ENCODE measurements at regions of chr11 and their contacts with region 1.

Region 1: DNA sequence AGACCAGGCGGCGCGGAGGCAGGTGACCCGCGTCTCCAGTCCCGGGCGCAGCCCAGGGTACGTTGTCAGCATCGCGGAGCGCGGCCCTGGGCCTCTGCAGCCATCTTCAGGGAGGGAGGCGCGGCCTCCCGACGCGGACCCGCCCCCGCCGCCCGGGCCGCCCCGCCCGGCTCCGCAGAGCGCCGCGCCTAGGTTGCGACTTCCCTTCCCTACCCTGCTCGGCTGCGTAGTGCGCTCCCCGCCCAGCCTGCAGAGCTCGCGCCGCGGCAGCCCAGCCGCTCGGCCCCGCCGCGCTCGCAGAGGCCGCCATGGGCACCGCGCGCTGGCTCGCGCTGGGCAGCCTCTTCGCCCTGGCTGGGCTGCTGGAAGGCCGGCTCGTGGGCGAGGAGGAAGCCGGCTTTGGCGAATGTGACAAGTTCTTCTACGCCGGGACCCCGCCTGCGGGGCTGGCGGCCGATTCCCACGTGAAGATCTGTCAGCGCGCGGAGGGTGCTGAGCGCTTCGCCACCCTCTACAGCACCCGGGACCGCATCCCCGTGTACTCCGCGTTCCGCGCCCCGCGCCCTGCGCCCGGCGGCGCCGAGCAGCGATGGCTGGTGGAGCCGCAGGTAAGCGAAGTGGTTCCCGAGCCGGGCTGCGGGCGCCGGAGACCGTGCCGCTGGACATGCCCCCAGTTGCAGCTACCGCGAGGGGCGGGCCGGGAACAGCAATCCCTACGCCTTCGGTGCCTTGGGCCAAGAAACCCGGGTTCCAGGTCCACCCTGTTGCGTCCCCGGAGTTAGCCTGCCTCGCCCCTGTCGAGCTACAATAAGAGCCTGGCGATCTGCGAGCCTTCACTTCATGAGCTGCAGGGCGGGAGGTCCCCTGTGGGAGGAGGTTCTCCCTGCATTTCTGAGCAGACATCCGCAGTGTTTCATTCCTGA is at the start of gene ENDOD1:
- DNase-seq: peak; percentile 88
- H3K4me3 Mint-ChIP-seq: peak within 1 kb of the TSS; percentile 84
- H3K27ac Mint-ChIP-seq: peak within 1 kb of the TSS; percentile 93
- H3K4me1 Mint-ChIP-seq: peaks cover 67% of the 10 kb centered on the region
- H3K27me3 Mint-ChIP-seq: no peaks in the 10 kb centered on the region
- total RNA-seq, gene ENDOD1: 20.6 to 22.2 TPM

Region 2: DNA sequence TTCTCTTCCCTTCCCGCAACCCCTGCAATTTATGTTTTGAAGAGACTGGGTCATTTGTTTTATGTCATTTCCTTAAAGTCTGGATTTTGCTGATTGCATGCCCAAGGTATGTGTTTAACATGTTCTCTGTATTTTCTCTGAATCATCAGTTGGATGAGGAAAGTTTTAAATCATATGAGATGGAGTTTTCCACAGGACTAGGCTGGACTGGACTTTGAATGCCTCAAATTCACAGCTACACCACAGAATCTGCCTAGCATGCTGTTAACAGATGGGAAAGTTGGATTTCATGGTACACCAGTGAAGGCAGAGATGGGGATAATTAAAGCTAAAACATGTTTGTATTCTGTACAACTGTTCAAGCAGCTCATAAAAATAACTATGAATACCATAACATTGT is 179.1 kb before region 1 on chr11:
- CTCF ChIA-PET with region 1: no interaction called
- POLR2A ChIA-PET with region 1: no interaction called
- DNase-seq: no peak
- H3K4me3 Mint-ChIP-seq: no peak overlapping the region
- H3K27ac Mint-ChIP-seq: no peak overlapping the region
- H3K4me1 Mint-ChIP-seq: no peaks in the 10 kb centered on the region
- H3K27me3 Mint-ChIP-seq: no peaks in the 10 kb centered on the region

Region 3: GRCh38 chr11:94973099-94973968 is 116.5 kb before region 1 on chr11 and contains the starts of genes CWC15 and KDM4D:
- CTCF ChIA-PET with region 1: interaction called, 4 read pairs
- POLR2A ChIA-PET with region 1: interaction called, 14 read pairs
- DNase-seq: peak; percentile 95
- H3K4me3 Mint-ChIP-seq: peak within 1 kb of the TSS; percentile 99
- H3K27ac Mint-ChIP-seq: peak within 1 kb of the TSS; percentile 88
- H3K4me1 Mint-ChIP-seq: peaks cover 53% of the 10 kb centered on the region
- H3K27me3 Mint-ChIP-seq: no peaks in the 10 kb centered on the region
- total RNA-seq, gene CWC15: 56.5 to 59.1 TPM
- total RNA-seq, gene KDM4D: 0.83 to 1.1 TPM

Region 4: GRCh38 chr11:95076416-95076815 is 13.5 kb before region 1 on chr11:
- CTCF ChIA-PET with region 1: interaction called, 167 read pairs
- POLR2A ChIA-PET with region 1: interaction called, 253 read pairs
- DNase-seq: no peak
- H3K4me3 Mint-ChIP-seq: no peak overlapping the region
- H3K27ac Mint-ChIP-seq: no peak overlapping the region
- H3K4me1 Mint-ChIP-seq: peaks cover 6% of the 10 kb centered on the region
- H3K27me3 Mint-ChIP-seq: no peaks in the 10 kb centered on the region

Region 5: GRCh38 chr11:95100191-95100648 is 10.3 kb after region 1 on chr11:
- CTCF ChIA-PET with region 1: interaction called, 7 read pairs
- POLR2A ChIA-PET with region 1: interaction called, 11 read pairs
- DNase-seq: no peak
- H3K4me3 Mint-ChIP-seq: no peak overlapping the region
- H3K27ac Mint-ChIP-seq: no peak overlapping the region
- H3K4me1 Mint-ChIP-seq: peaks cover 26% of the 10 kb centered on the region
- H3K27me3 Mint-ChIP-seq: no peaks in the 10 kb centered on the region

Region 6: DNA sequence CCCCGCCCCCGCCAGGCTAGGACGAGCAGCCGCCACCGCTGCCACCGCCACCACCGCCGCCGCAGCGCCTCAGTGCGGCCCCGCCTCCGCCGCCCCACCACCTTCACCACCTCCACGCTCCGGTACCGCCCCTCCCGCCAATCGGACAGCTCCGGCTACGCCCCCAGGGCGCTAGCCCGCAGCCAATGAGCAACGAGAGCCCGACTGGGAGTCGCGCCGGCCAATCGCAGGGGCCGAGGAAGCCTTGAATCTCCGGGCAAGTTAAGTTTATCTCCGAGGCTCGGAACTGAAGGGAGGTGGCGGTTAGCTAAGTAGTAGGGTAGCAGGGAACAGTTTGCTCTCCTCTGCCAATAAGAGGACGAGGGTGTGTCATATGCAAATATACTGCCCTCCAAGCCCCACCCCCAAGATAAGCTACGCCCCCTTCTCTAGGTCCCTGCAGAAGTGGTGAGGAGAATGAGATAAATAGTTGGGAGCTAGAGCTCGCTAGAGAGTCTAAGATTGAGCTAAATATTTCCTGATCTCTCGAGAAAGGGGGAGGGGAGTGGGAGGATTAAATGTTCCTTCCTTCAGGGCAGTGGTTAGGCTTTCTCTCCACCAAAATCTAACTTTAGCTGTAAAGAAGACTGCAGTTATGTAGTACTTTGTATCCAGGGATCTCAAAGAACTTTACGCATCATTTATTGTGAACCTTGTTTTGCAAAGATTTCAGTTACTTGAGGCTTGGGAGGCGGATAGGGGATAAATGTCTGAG is 141.4 kb after region 1 on chr11 and contains the start of gene SESN3:
- CTCF ChIA-PET with region 1: interaction called, 4 read pairs
- POLR2A ChIA-PET with region 1: interaction called, 22 read pairs
- DNase-seq: peak; percentile 99
- H3K4me3 Mint-ChIP-seq: no peak within 1 kb of the TSS
- H3K27ac Mint-ChIP-seq: peak within 1 kb of the TSS; percentile 79
- H3K4me1 Mint-ChIP-seq: peaks cover 36% of the 10 kb centered on the region
- H3K27me3 Mint-ChIP-seq: peaks cover 12% of the 10 kb centered on the region
- total RNA-seq, gene SESN3: 23.2 to 24.6 TPM

Region 7: DNA sequence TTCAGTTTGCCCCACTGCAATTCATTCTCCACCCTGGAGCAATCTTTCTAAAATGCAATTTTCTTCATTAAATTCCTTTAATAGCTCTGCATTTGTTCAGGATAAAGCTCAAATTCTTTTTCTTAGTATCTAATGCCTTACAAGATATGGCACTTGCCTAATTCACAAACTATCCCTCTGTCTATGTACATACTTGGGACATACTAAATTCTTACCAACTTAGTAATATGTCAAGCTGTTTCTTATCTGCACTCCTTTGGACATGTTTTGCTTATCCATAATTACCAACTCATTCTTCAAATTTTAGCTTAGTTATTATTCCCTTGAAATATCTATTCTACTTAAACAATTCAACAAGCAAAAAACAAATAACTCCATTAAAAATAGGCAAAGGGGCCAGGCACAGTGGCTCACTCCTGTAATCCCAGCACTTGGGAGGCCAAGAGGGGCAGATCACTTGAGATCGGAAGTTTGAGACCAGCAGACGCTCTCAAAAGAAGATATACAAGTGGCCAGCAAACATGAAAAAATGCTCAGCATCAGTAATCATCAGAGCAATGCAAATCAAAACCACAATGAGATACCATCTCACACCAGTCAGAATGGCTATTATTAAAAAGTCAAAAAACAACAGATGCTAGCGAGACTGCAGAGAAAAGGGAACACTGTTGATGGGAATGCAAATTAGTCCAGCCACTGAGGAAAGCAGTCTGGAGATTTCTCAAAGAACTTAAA is 602.8 kb after region 1 on chr11:
- CTCF ChIA-PET with region 1: no interaction called
- POLR2A ChIA-PET with region 1: interaction called, 12 read pairs
- DNase-seq: no peak
- H3K4me3 Mint-ChIP-seq: no peak overlapping the region
- H3K27ac Mint-ChIP-seq: no peak overlapping the region
- H3K4me1 Mint-ChIP-seq: peaks cover 5% of the 10 kb centered on the region
- H3K27me3 Mint-ChIP-seq: no peaks in the 10 kb centered on the region